Breast epithelium (tissue), 4 donors: ENCODE measurements at regions of chr19 and their contacts with region 1.

Region 1: DNA sequence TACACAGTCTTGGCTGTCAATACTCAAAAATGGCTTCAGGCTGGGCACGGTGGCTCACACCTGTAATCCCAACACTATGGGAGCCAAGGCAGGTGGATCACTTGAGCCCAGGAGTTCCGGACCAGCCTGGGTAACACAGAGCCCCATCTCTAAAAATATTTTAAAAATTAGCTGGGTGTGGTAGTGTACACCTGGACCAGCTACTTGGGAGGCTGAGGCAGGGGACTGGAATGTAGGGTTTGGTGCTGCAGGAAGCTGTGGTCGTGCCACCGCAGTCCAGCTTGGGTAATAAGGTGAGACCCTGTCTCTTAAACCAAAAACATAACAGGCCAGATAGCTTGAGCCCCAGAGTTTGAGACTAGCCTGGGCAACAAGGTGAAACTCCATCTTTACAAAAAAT is 6.7 kb upstream of the CHERP start:
- DNase-seq: no peak
- H3K4me3 ChIP-seq: no peak overlapping the region
- H3K27ac ChIP-seq: no peak overlapping the region
- H3K4me1 ChIP-seq: no peaks in the 10 kb centered on the region
- H3K27me3 ChIP-seq: no peaks in the 10 kb centered on the region
- CTCF ChIP-seq: no peak
- POLR2A ChIP-seq: no peak

Region 2: DNA sequence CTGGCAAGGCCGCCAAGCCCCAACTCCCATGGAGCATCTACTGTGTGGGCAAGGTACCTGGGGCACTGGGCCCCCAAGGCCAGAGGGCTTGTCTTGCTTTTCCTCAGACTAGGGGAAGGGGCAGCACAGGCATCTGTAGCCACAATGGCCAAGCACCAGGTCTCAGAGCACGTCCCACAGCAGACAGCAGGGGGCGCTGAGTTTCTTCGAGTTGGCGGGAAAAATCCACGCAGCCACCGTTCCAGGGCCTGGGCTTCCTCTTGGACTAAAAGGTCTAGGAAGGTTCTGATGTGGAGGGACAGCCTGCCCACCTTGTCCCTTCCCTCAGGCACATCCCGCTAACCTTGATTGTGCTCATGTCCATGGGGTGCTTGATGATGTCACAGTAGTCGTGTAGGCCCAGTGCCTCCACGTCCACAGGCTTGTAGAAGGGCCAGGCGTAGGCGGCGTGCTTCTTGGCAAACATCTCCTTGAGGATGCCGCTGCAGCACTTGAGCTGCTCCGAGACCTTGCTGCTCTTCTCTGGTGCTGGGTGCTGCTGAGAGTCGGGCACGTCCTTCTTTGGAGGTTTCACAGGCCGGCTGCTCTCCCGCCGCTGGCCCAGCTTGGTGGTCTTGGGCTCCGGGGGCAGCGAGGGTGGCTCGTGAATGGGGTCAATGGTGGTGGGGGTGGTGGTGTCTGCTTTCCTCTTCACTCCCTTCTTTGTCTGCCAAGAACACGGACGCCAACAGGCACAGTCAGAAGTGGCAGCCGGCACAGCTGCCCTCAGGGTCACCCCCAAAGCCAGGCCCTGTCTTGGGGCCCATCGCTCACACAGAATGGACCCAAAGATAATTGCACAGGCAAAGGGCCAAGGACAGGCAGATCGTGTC is 1284.7 kb before region 1 on chr19:
- intact Hi-C with region 1: no loop called
- DNase-seq: peak; percentile 59 to 69
- H3K4me3 ChIP-seq: no peak overlapping the region
- H3K27ac ChIP-seq: peak overlapping the region; percentile 33 to 90
- H3K4me1 ChIP-seq: peaks cover 19 to 23% of the 10 kb centered on the region in 2 donors
- H3K27me3 ChIP-seq: no peaks in the 10 kb centered on the region
- CTCF ChIP-seq: peak; percentile 73 to 87 (median 75)
- POLR2A ChIP-seq: no peak

Region 3: DNA sequence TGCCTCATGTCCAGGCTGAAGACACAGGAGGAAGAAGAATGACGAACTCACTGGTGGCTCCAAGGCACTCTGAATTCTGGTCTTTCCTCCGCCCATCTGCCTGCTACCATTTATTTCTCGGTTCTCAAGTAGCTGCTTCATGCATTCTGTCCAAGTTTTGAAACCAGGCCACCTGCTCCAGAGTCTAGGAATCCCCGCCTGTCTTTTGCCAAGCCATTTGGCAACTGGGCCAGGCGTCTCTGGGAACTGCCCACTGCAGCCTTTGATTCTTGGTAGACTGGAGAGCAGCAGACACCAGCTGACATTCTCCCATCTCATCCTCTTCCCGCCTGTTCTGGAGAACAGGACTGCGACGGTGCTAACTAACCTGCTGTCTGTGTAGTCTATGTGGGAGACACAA is 12.4 kb after region 1 on chr19:
- intact Hi-C with region 1: loop called (anchors 1 kb)
- DNase-seq: no peak
- H3K4me3 ChIP-seq: no peak overlapping the region
- H3K27ac ChIP-seq: no peak overlapping the region
- H3K4me1 ChIP-seq: no peaks in the 10 kb centered on the region
- H3K27me3 ChIP-seq: no peaks in the 10 kb centered on the region
- CTCF ChIP-seq: no peak
- POLR2A ChIP-seq: no peak